Naive thymus-derived CD4-positive, alpha-beta T cell (primary cell): ENCODE measurements at regions of chr3 and their contacts with region 1.

Region 1: DNA sequence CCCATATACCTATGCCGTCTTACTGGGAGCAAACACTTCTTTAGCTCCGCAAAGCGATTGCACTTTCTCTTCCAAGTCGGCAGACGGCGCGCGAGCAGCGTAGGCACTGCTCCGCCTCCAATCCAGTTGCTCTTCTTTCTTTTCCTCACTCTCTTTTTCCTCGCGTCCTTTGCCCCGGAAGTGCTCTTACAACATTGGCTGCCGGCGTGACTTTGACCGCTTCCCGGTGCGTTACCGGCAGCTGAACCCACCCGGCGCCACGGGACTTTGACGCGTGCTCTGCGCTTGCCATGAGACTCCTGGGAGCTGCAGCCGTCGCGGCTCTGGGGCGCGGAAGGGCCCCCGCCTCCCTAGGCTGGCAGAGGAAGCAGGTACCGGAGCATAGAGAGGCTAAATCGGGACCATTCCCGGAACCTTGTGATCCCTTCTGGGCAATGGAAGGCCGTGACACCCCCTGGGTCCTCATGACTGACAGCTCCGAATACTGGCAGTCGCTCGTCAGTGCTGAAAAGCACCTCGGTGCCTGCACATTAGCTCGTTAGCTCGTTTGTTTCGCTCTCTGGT is at the start of gene GFM1:
- DNase-seq: peak; percentile 76 to 92 (median 86)
- ATAC-seq: peak; percentile 98
- H3K4me3 ChIP-seq: peak within 1 kb of the TSS; percentile 98
- H3K4me3 Mint-ChIP-seq: peak within 1 kb of the TSS; percentile 87 to 98 (median 96)
- H3K27ac ChIP-seq: peak within 1 kb of the TSS; percentile 82
- H3K27ac Mint-ChIP-seq: peak within 1 kb of the TSS; percentile 63 to 96 (median 93)
- H3K4me1 ChIP-seq: peaks cover 8 to 21% of the 10 kb centered on the region in 2 donors
- H3K4me1 Mint-ChIP-seq: peaks cover 17 to 58% (median 41%) of the 10 kb centered on the region in 7 donors
- H3K27me3 ChIP-seq: no peaks in the 10 kb centered on the region
- H3K27me3 Mint-ChIP-seq: no peaks in the 10 kb centered on the region
- total RNA-seq, gene GFM1: 36.4 to 43.4 (median 41.8) TPM

Region 2: DNA sequence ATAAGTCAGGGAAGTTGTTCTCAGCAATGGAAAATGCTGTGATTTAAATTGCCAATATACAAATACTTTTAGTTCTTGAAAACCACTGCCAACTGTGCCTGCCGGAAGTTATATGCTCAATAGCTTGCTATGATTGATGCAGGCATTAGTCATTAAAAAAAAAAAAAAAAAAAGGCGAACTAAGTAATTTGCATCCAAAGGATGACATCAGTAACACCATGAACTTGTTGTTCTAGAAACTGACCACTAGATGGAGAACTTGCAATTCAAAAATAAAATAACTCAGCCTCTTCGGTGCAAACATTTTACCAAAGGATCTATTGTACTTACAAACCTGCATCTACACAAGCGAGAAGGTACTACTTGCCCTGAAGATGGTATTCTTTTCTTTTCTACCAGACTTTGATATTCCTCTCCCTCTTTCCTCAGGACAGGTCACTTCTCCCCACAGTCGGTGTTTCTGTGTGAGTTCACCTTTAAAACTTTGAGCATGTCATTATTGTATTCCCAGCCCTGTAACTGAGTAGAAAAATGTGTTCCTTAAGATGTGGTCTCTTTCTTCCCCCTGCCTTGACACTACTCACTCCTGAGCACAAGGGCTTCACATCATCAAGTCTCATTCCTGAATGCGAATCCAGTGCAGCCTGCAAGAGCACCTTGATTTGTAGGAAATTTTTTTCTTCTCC is 1026.2 kb before region 1 on chr3:
- CTCF ChIA-PET with region 1: no interaction called
- POLR2A ChIA-PET with region 1: no interaction called
- intact Hi-C with region 1: loop called (anchors 2 to 5 kb)
- DNase-seq: peak in 6 of 9 donors; percentile 4 to 44 (median 24)
- ATAC-seq: peak; percentile 78
- H3K4me3 ChIP-seq: no peak overlapping the region
- H3K4me3 Mint-ChIP-seq: peak overlapping the region in 1 of 10 donors; percentile 3
- H3K27ac ChIP-seq: no peak overlapping the region
- H3K27ac Mint-ChIP-seq: peak overlapping the region in 1 of 9 donors; percentile 5
- H3K4me1 ChIP-seq: peaks cover 0 to 4% of the 10 kb centered on the region in 2 donors
- H3K4me1 Mint-ChIP-seq: peaks cover 0 to 6% (median 5%) of the 10 kb centered on the region in 7 donors
- H3K27me3 ChIP-seq: no peaks in the 10 kb centered on the region
- H3K27me3 Mint-ChIP-seq: peaks cover 10 to 22% (median 13%) of the 10 kb centered on the region in 5 donors

Region 3: GRCh38 chr3:158570999-158571974 is 73.1 kb before region 1 on chr3 and contains the start of gene MLF1:
- CTCF ChIA-PET with region 1: interaction called, 3 read pairs
- POLR2A ChIA-PET with region 1: no interaction called
- intact Hi-C with region 1: loop called (anchors 2 to 5 kb)
- DNase-seq: peak; percentile 53 to 81 (median 66)
- ATAC-seq: peak; percentile 96
- H3K4me3 ChIP-seq: peak within 1 kb of the TSS; percentile 66
- H3K4me3 Mint-ChIP-seq: peak within 1 kb of the TSS; percentile 78 to 93 (median 86)
- H3K27ac ChIP-seq: peak within 1 kb of the TSS; percentile 14
- H3K27ac Mint-ChIP-seq: peak within 1 kb of the TSS in 8 of 9 donors; percentile 41 to 93 (median 76)
- H3K4me1 ChIP-seq: peaks cover 0 to 4% of the 10 kb centered on the region in 2 donors
- H3K4me1 Mint-ChIP-seq: peaks cover 6 to 15% (median 12%) of the 10 kb centered on the region in 7 donors
- H3K27me3 ChIP-seq: peaks cover 0 to 4% of the 10 kb centered on the region in 2 donors
- H3K27me3 Mint-ChIP-seq: peaks cover 31 to 50% (median 41%) of the 10 kb centered on the region in 5 donors
- total RNA-seq, gene MLF1: 0.56 to 3.6 (median 0.84) TPM in 4 of 5 experiments, not detected in the other

Region 4: DNA sequence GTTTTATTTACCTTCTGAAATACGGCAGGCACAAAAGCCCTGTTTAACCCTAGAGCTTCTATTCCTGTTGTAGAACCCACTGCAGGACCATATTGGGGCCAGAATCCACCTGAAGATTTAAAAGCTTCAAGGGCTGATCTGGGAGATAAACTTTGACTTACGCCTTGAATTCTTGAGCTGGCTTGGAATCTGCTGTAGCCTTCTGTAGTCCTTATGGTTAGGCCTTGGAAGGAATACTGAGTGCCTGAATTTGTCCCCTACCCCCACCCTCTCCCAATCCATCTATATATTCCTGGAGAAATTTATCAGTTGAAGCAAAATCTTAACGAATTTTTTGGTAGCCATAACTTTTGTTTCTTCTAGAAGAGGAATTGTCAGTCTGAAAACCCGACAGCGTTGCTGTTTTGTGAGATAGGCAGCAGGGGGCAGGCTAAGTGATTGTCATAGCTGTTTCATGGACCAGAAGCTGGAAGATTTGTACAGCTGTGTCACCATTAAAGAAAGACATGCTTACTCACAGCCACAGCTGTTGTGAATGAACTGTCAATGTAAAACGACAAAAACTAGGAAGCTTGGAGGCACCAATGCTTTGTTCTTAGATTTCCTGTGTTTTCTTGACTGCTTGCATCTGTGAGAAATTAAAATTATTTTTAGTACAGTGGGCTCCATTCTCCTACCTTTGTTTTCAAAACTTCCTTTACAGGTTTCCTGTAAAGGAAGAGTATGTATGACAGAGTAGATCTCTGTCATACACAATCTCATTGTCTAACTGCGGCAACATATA is 15.2 kb after region 1 on chr3:
- CTCF ChIA-PET with region 1: interaction called, 27 read pairs
- POLR2A ChIA-PET with region 1: interaction called, 9 read pairs
- intact Hi-C with region 1: loop called in 1 of 2 experiments (anchors 2 kb)
- DNase-seq: peak in 8 of 9 donors; percentile 23 to 57 (median 39)
- ATAC-seq: peak; percentile 92
- H3K4me3 ChIP-seq: no peak overlapping the region
- H3K4me3 Mint-ChIP-seq: no peak overlapping the region
- H3K27ac ChIP-seq: no peak overlapping the region
- H3K27ac Mint-ChIP-seq: peak overlapping the region in 4 of 9 donors; percentile 21 to 62 (median 30)
- H3K4me1 ChIP-seq: no peaks in the 10 kb centered on the region
- H3K4me1 Mint-ChIP-seq: peaks cover 0 to 17% (median 7%) of the 10 kb centered on the region in 7 donors
- H3K27me3 ChIP-seq: no peaks in the 10 kb centered on the region
- H3K27me3 Mint-ChIP-seq: no peaks in the 10 kb centered on the region

Region 5: GRCh38 chr3:158727206-158728060 is 83.0 kb after region 1 on chr3:
- CTCF ChIA-PET with region 1: interaction called, 9 read pairs
- POLR2A ChIA-PET with region 1: interaction called, 3 read pairs
- intact Hi-C with region 1: loop called in 1 of 2 experiments (anchors 5 kb)
- DNase-seq: peak in 7 of 9 donors; percentile 35 to 74 (median 63)
- ATAC-seq: peak; percentile 79
- H3K4me3 ChIP-seq: peak overlapping the region; percentile 18
- H3K4me3 Mint-ChIP-seq: peak overlapping the region in 9 of 10 donors; percentile 42 to 75 (median 64)
- H3K27ac ChIP-seq: no peak overlapping the region
- H3K27ac Mint-ChIP-seq: peak overlapping the region; percentile 51 to 95 (median 90)
- H3K4me1 ChIP-seq: peaks cover 10% of the 10 kb centered on the region in 2 donors
- H3K4me1 Mint-ChIP-seq: peaks cover 10 to 62% (median 30%) of the 10 kb centered on the region in 7 donors
- H3K27me3 ChIP-seq: no peaks in the 10 kb centered on the region
- H3K27me3 Mint-ChIP-seq: peaks cover 0 to 4% (median 0%) of the 10 kb centered on the region in 5 donors

Region 6: GRCh38 chr3:158801696-158802408 is 157.4 kb after region 1 on chr3 and contains the start of gene MFSD1:
- CTCF ChIA-PET with region 1: interaction called, 10 read pairs
- POLR2A ChIA-PET with region 1: interaction called, 17 read pairs
- intact Hi-C with region 1: loop called in 1 of 2 experiments (anchors 2 kb)
- DNase-seq: peak; percentile 73 to 91 (median 83)
- ATAC-seq: peak; percentile 94
- H3K4me3 ChIP-seq: peak within 1 kb of the TSS; percentile 88
- H3K4me3 Mint-ChIP-seq: peak within 1 kb of the TSS; percentile 84 to 93 (median 90)
- H3K27ac ChIP-seq: peak within 1 kb of the TSS; percentile 76
- H3K27ac Mint-ChIP-seq: peak within 1 kb of the TSS; percentile 58 to 98 (median 92)
- H3K4me1 ChIP-seq: peaks cover 9 to 11% of the 10 kb centered on the region in 2 donors
- H3K4me1 Mint-ChIP-seq: peaks cover 24 to 50% (median 43%) of the 10 kb centered on the region in 7 donors
- H3K27me3 ChIP-seq: no peaks in the 10 kb centered on the region
- H3K27me3 Mint-ChIP-seq: peaks cover 0 to 24% (median 0%) of the 10 kb centered on the region in 5 donors
- total RNA-seq, gene MFSD1: 24.6 to 66.0 (median 31.1) TPM